Head of caudate nucleus (tissue), 42 donors: ENCODE measurements at regions of chr19 and their contacts with region 1.

Region 1: GRCh38 chr19:49665351-49666119 is at the starts of genes BCL2L12 and IRF3:
- DNase-seq: peak; percentile 92 to 100 (median 98)

Region 2: DNA sequence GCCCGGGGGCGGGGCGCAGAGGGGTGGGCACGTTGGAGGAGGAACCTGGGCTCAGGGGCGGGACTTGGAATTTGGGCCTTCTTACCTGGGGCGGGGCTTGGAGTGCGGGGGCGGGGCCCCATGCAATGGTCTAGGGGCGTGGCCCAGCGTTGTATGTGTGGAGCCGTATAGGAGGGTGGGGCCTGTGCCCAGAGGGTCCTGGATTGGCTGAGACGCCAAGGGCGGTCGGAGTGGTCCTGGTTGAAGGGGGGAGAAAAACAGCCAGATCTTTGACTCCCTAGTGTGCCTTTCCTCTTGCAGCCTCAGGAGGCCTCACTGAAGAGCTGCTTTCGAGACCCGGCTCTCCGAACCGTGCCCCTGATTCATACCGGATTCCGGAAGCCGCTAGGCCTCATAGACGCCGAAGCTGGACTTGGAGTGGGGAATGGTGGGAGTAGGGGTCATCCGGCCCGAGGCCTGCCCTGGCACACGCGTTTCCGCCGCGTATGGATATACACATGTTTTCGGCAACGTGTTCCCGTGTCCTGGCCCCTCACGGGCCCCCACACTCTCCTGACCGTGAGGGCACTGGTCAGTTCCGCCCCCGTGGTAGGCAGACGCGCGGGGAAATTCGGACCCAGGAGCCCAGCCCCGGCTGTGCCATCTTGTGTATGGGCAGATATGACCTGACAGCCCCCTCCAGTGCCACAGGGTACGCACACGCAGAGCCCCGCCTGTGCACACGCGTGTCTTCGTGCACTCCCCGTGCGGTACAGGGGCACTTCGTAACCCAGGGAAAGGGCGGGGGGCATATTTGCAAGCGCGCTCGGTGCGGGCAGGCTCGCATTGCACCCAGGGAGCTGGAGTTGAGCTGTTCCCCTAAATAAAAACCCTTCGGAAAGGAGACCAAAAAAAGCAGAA is 75.2 kb before region 1 on chr19:
- intact Hi-C with region 1: loop called (anchors 10 kb)
- DNase-seq: peak; percentile 77 to 98 (median 92)